Activated T-helper 1 cell treated with anti-CD3 and anti-CD28 coated beads, Interleukin-12 subunit alpha, Interleukin-12 subunit beta, Interleukin-2, Interleukin-4 antibody, amounts not matched to agents 30 ng/mL and 10 ng/mL and 1 ng/mL, durations not matched to agents 14 hours and 24 hours and 36 hours (primary cell): ENCODE measurements at regions of chr1 and their contacts with region 1.

Region 1: GRCh38 chr1:166875734-166876539 is at the start of gene TADA1:
- DNase-seq: peak; percentile 97
- H3K4me3 Mint-ChIP-seq: peak within 1 kb of the TSS; percentile 92
- H3K27ac Mint-ChIP-seq: peak within 1 kb of the TSS; percentile 98
- H3K4me1 Mint-ChIP-seq: peaks cover 50% of the 10 kb centered on the region
- H3K27me3 Mint-ChIP-seq: peaks cover 3% of the 10 kb centered on the region
- total RNA-seq, gene TADA1: 15.6 and 17.3 TPM in 2 replicates

Region 2: GRCh38 chr1:165768513-165769394 is 1107.2 kb before region 1 on chr1 and contains the start of gene TMCO1:
- intact Hi-C with region 1: loop called (anchors 1 kb)
- DNase-seq: peak; percentile 94
- H3K4me3 Mint-ChIP-seq: peak within 1 kb of the TSS; percentile 99
- H3K27ac Mint-ChIP-seq: peak within 1 kb of the TSS; percentile 100
- H3K4me1 Mint-ChIP-seq: peaks cover 53% of the 10 kb centered on the region
- H3K27me3 Mint-ChIP-seq: no peaks in the 10 kb centered on the region
- total RNA-seq, gene TMCO1: 97.1 and 102 TPM in 2 replicates

Region 3: DNA sequence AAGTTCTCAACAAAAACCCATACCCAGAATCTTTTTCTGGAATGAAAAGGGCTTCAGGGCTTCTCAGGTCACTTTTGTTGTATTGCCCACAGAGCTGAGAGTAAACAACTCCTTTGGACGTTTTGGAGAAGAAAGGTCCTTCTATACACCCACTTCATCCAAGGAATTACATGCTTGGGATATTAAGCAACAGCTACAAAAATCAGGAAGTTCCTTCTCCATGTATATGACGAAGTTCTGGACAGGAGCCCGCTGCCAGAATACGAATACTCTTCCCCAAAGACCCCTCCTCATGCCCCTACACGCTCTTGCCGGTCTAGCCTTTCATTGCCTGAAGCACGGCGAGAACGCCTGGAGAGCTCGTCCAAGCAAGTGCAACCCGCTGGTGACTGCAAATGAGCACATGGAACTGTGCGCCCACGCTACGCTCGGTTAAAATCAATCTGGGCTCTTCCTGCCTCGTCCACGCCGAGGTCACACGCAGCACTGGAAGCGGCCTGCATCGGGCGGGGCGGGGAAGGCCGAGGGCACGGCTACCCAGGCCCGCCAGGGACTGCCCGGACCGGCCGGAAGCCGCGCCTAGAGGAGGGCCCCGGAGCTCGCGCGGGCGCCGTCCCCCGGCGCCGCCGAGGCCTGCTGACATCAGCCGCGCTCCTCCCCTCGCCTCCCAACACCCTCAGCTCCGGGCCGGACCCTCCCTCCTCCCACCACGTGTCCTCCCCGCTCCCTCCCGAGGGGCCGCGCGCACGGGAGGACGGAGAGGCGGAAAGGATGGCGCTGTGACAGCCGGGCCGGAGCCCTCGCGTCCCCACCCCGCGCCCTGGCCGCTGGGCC is 37.0 kb before region 1 on chr1 and contains the start of gene POGK:
- intact Hi-C with region 1: loop called (anchors 1 kb)
- DNase-seq: peak; percentile 84
- H3K4me3 Mint-ChIP-seq: peak within 1 kb of the TSS; percentile 94
- H3K27ac Mint-ChIP-seq: peak within 1 kb of the TSS; percentile 97
- H3K4me1 Mint-ChIP-seq: peaks cover 64% of the 10 kb centered on the region
- H3K27me3 Mint-ChIP-seq: no peaks in the 10 kb centered on the region
- total RNA-seq, gene POGK: 51.4 and 54.1 TPM in 2 replicates

Region 4: DNA sequence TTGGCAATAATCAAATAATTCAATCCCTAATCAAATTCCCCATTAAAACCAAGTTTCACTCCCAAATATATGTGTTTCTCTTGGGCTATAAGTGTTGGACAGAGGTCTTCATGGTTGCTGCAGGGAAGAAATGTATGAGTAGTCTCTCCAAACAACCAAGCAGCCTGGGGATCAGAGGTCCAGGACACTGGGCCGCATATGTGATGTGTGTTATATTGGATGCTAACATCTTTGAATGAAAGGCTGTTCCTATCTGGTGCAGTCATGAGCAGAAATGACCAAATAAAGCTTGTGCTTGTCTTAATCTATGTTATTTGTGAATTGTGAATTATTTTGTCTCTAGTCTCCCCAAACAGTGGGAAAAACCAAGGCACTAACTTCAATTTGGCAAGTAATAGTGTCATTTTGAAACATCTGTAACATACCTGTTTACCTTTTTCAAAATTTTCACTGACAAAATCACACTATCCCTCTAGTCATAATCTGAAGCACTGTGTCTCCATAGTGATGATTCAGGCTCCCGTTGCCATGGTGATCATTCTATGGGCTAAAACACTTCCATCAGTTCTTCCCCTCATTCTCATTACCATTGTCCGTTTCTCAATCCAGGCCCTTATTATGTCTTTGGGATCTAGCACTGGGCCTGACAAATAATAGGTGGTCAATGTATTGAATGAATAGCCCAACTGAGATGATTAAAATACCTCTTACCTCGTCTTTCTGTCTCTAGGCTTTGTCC is 12.6 kb after region 1 on chr1:
- intact Hi-C with region 1: no loop called
- DNase-seq: no peak
- H3K4me3 Mint-ChIP-seq: no peak overlapping the region
- H3K27ac Mint-ChIP-seq: no peak overlapping the region
- H3K4me1 Mint-ChIP-seq: peaks cover 18% of the 10 kb centered on the region
- H3K27me3 Mint-ChIP-seq: peaks cover 22% of the 10 kb centered on the region

Region 5: GRCh38 chr1:166924823-166925541 is 49.0 kb after region 1 on chr1:
- intact Hi-C with region 1: no loop called
- DNase-seq: no peak
- H3K4me3 Mint-ChIP-seq: no peak overlapping the region
- H3K27ac Mint-ChIP-seq: no peak overlapping the region
- H3K4me1 Mint-ChIP-seq: no peaks in the 10 kb centered on the region
- H3K27me3 Mint-ChIP-seq: peaks cover 13% of the 10 kb centered on the region

Region 6: GRCh38 chr1:166975361-166976129 is 99.6 kb after region 1 on chr1 and contains the start of gene ILDR2:
- intact Hi-C with region 1: loop called (anchors 1 kb)
- DNase-seq: peak; percentile 41
- H3K4me3 Mint-ChIP-seq: peak within 1 kb of the TSS; percentile 94
- H3K27ac Mint-ChIP-seq: peak within 1 kb of the TSS; percentile 80
- H3K4me1 Mint-ChIP-seq: peaks cover 58% of the 10 kb centered on the region
- H3K27me3 Mint-ChIP-seq: peaks cover 28% of the 10 kb centered on the region
- total RNA-seq, gene ILDR2: 11.3 and 14.4 TPM in 2 replicates

Region 7: DNA sequence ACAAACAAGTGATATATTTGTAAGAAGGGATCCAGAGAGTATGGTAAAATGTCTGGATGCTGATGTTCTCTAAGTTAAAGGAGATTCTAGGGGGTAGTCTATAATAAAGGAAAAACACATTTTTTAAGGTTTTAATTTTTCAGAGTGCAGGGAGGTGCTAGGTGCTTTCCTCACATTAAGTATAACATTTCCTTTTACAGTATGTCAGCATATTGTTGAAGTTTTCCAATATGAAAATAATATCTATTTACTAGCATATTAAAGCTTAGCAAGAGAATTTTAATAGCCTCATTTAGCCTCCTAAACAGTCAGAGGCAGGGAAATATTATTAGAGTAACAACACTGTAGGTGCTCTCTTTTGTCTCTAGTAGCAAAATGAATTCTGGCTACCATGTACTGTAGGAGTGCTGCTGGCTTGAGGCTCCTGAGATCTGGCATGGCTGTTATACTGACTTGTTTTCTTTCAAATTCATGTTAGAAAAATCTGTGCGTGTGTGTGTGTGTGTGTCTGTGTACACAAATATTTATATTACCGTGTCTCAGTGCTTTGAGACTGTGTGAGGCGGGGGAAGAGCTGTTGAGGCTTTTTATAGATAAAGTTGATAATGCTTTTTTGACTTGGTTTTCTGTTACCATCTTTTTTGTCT is 415.7 kb after region 1 on chr1:
- intact Hi-C with region 1: no loop called
- DNase-seq: no peak
- H3K4me3 Mint-ChIP-seq: no peak overlapping the region
- H3K27ac Mint-ChIP-seq: no peak overlapping the region
- H3K4me1 Mint-ChIP-seq: peaks cover 11% of the 10 kb centered on the region
- H3K27me3 Mint-ChIP-seq: no peaks in the 10 kb centered on the region

Region 8: GRCh38 chr1:167517535-167518330 is 641.8 kb after region 1 on chr1:
- intact Hi-C with region 1: loop called (anchors 10 kb)
- DNase-seq: peak; percentile 76
- H3K4me3 Mint-ChIP-seq: peak overlapping the region; percentile 97
- H3K27ac Mint-ChIP-seq: peak overlapping the region; percentile 98
- H3K4me1 Mint-ChIP-seq: peaks cover 59% of the 10 kb centered on the region
- H3K27me3 Mint-ChIP-seq: peaks cover 7% of the 10 kb centered on the region